ENCODE measurements at regions of chr16 and their contacts with region 1.

Region 1: DNA sequence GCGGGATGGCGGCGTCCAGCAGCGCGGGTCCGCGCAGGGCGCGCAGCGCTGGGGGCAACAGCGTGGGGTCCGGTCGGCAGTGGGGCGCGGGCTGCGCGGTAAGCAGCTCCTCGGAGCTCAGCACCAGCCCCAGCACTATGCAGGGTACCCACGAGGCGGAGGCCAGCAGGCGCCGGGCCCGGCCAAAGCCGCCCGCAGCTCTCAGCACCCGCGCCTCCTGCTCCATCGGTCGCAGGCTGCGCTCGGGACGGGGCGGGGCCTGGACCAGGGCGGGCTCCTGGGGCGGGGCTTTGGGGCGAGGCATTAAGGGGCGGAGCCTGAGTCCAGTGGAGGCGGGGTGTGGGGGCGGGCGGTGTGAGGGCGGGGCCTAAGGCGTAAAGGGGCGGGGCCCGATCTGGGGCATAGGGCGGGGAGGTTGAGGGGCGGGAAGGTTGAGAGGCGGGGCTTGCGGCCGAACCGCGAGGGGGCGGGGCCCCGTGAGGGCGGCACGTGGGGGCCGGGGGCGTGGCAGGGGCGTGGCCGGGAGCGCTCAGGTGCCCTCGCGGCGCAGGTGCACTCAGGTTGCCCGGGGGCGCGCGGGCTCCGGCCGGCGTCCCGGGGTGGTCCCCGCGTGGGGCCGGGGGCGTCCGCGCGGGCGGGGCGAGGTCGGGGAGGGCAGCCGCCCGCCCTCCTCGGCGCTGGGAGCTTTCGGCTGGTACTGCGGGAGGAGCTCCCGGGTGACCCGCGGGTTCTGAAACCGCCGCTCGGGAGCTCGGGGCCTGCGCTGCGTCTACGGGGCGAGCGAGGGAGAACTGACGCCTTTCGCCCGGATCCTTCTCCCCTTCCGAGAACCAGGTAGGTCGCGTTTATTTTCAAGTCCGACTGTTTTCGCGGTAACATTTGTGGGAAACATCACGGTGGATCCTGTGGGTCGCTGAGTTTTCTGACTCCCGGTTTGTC is 1.4 kb upstream of the SLC22A31 start:
- DNase-seq: no peak
- H3K4me3 ChIP-seq: no peak overlapping the region
- CTCF ChIP-seq: no peak

Region 2: GRCh38 chr16:89115216-89115861 is 86.4 kb before region 1 on chr16:
- in situ Hi-C with region 1: loop called (anchors 5 kb)
- DNase-seq: no peak
- H3K4me3 ChIP-seq: no peak overlapping the region
- CTCF ChIP-seq: no peak